Heart right ventricle (tissue), 16 donors: ENCODE measurements at regions of chr15 and their contacts with region 1.

Region 1: GRCh38 chr15:24748812-24749439 is 73.4 kb downstream of the NPAP1 start:
- DNase-seq: no peak
- ATAC-seq: no peak
- H3K4me3 ChIP-seq: no peak overlapping the region
- H3K27ac ChIP-seq: no peak overlapping the region
- H3K4me1 ChIP-seq: no peaks in the 10 kb centered on the region
- H3K27me3 ChIP-seq: peaks cover 0 to 4% (median 0%) of the 10 kb centered on the region in 7 donors
- CTCF ChIP-seq: no peak

Region 2: DNA sequence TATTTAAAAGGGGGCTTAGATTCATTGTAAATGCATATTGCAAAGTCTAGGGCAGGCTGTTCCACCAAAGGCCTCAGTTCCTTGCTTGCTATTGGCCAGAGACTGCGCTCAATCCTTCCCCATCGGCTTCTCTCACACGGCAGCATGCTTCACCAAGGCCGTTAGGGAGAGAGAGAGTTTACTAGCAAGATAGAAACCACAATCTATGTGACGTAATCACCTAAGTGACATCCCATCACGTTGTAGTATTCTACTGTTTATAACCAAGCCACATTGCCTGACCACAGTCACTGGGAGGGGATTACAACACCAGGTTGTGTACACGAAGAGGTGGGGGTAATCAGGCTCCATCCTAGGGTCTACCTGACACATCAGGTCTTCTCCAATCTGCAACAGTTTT is 89.3 kb before region 1 on chr15:
- intact Hi-C with region 1: loop called in 1 of 10 experiments (anchors 10 kb)
- DNase-seq: no peak
- ATAC-seq: no peak
- H3K4me3 ChIP-seq: no peak overlapping the region
- H3K27ac ChIP-seq: no peak overlapping the region
- H3K4me1 ChIP-seq: no peaks in the 10 kb centered on the region
- H3K27me3 ChIP-seq: no peaks in the 10 kb centered on the region
- CTCF ChIP-seq: no peak

Region 3: GRCh38 chr15:24898715-24899272 is 149.9 kb after region 1 on chr15:
- intact Hi-C with region 1: no loop called
- DNase-seq: no peak
- ATAC-seq: no peak
- H3K4me3 ChIP-seq: no peak overlapping the region
- H3K27ac ChIP-seq: no peak overlapping the region
- H3K4me1 ChIP-seq: no peaks in the 10 kb centered on the region
- H3K27me3 ChIP-seq: no peaks in the 10 kb centered on the region
- CTCF ChIP-seq: no peak